ENCODE measurements at regions of chr2 and their contacts with region 1.

Region 1: DNA sequence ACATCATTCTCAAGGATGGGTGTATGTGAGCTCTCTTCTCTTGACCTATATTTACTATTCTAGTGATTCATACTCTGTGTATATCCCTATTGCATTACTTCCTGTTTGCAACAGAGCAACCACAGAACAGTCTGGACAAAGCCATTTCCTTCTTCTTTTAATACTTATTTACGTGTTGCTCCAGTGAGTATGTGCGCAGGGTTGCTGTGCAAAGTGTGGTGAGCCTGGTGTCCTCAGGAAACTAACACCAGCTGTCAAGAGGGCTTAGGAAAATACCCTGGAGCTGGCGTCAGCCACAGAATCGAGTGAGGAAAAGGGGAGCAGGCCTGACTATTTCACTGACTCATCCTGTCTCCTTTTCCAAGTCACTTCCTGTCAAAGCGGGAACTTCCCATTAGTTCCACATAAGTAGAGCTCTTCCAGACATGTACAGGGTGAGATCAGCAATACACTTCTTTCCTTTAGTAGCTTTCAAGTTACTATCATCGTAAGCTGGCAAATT is 214.1 kb upstream of the COPS8 start:
- DNase-seq: peak; percentile 94
- H3K4me3 Mint-ChIP-seq: peak overlapping the region; percentile 22
- H3K27ac Mint-ChIP-seq: peak overlapping the region; percentile 97
- H3K4me1 Mint-ChIP-seq: peaks cover 19% of the 10 kb centered on the region
- H3K27me3 Mint-ChIP-seq: no peaks in the 10 kb centered on the region
- CTCF ChIP-seq: no peak

Region 2: DNA sequence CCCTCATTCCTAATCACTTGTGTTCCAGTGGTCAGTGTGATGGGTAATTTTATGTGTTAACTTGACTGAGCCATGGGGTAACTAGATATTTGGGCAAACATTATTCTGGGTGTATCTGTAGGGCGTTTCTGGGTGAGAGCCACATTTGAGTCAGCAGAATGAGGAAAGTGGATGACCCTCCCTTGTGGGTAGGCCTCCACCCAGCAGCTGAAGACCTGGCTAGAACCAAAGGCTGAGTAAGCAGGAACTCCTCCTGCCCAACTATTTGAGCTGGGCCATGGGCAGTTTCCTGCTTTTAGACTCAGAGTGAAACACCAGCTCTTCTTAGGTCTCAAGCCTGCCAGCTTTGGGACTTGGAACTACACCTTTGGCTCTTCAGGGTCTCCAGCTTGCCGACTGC is 160.1 kb before region 1 on chr2:
- CTCF ChIA-PET with region 1: no interaction called
- POLR2A ChIA-PET with region 1: interaction called, 4 read pairs
- intact Hi-C with region 1: loop called (anchors 10 kb)
- DNase-seq: peak; percentile 42
- H3K4me3 Mint-ChIP-seq: no peak overlapping the region
- H3K27ac Mint-ChIP-seq: no peak overlapping the region
- H3K4me1 Mint-ChIP-seq: peaks cover 26% of the 10 kb centered on the region
- H3K27me3 Mint-ChIP-seq: no peaks in the 10 kb centered on the region
- CTCF ChIP-seq: no peak

Region 3: GRCh38 chr2:236824877-236825692 is 46.5 kb before region 1 on chr2:
- CTCF ChIA-PET with region 1: no interaction called
- POLR2A ChIA-PET with region 1: no interaction called
- intact Hi-C with region 1: no loop called
- DNase-seq: no peak
- H3K4me3 Mint-ChIP-seq: no peak overlapping the region
- H3K27ac Mint-ChIP-seq: peak overlapping the region; percentile 9
- H3K4me1 Mint-ChIP-seq: peaks cover 5% of the 10 kb centered on the region
- H3K27me3 Mint-ChIP-seq: no peaks in the 10 kb centered on the region
- CTCF ChIP-seq: no peak

Region 4: GRCh38 chr2:236972491-236973342 is 101.2 kb after region 1 on chr2:
- CTCF ChIA-PET with region 1: no interaction called
- POLR2A ChIA-PET with region 1: no interaction called
- intact Hi-C with region 1: loop called (anchors 10 kb)
- DNase-seq: peak; percentile 72
- H3K4me3 Mint-ChIP-seq: no peak overlapping the region
- H3K27ac Mint-ChIP-seq: no peak overlapping the region
- H3K4me1 Mint-ChIP-seq: peaks cover 9% of the 10 kb centered on the region
- H3K27me3 Mint-ChIP-seq: no peaks in the 10 kb centered on the region
- CTCF ChIP-seq: no peak

Measured in MCF 10A (cell line).